Natural killer cell (primary cell): ENCODE measurements at regions of chr18 and their contacts with region 1.

Region 1: GRCh38 chr18:5295981-5296705 is 617 bp upstream of the ZBTB14 start:
- DNase-seq: peak; percentile 89 to 98
- ATAC-seq: peak; percentile 65 to 88 (median 74)
- H3K4me3 ChIP-seq: peak overlapping the region; percentile 87
- H3K4me3 Mint-ChIP-seq: peak overlapping the region; percentile 94
- H3K27ac ChIP-seq: peak overlapping the region; percentile 95
- H3K27ac Mint-ChIP-seq: peak overlapping the region; percentile 95 to 96
- H3K4me1 ChIP-seq: peaks cover 16% of the 10 kb centered on the region
- H3K4me1 Mint-ChIP-seq: peaks cover 20 to 31% of the 10 kb centered on the region in 2 donors
- H3K27me3 ChIP-seq: peaks cover 3% of the 10 kb centered on the region
- H3K27me3 Mint-ChIP-seq: peaks cover 3 to 24% of the 10 kb centered on the region in 2 donors
- CTCF ChIP-seq: no peak

Region 2: GRCh38 chr18:5237723-5238370 is 58.3 kb before region 1 on chr18:
- intact Hi-C with region 1: loop called (anchors 1 kb)
- DNase-seq: peak; percentile 89 to 91
- ATAC-seq: peak; percentile 88 to 96 (median 90)
- H3K4me3 ChIP-seq: peak overlapping the region; percentile 68
- H3K4me3 Mint-ChIP-seq: peak overlapping the region; percentile 95
- H3K27ac ChIP-seq: peak overlapping the region; percentile 94
- H3K27ac Mint-ChIP-seq: peak overlapping the region; percentile 97
- H3K4me1 ChIP-seq: peaks cover 14% of the 10 kb centered on the region
- H3K4me1 Mint-ChIP-seq: peaks cover 26 to 47% of the 10 kb centered on the region in 2 donors
- H3K27me3 ChIP-seq: peaks cover 2% of the 10 kb centered on the region
- H3K27me3 Mint-ChIP-seq: peaks cover 11 to 16% of the 10 kb centered on the region in 2 donors
- CTCF ChIP-seq: peak; percentile 11

Region 3: GRCh38 chr18:5309888-5310470 is 13.8 kb after region 1 on chr18:
- intact Hi-C with region 1: loop called (anchors 2 kb)
- DNase-seq: peak in 1 of 2 donors; percentile 72
- ATAC-seq: peak; percentile 90 to 96 (median 95)
- H3K4me3 ChIP-seq: peak overlapping the region; percentile 32
- H3K4me3 Mint-ChIP-seq: peak overlapping the region; percentile 86
- H3K27ac ChIP-seq: peak overlapping the region; percentile 83
- H3K27ac Mint-ChIP-seq: peak overlapping the region; percentile 86 to 90
- H3K4me1 ChIP-seq: peaks cover 5% of the 10 kb centered on the region
- H3K4me1 Mint-ChIP-seq: peaks cover 26 to 27% of the 10 kb centered on the region in 2 donors
- H3K27me3 ChIP-seq: no peaks in the 10 kb centered on the region
- H3K27me3 Mint-ChIP-seq: no peaks in the 10 kb centered on the region
- CTCF ChIP-seq: no peak